Esophagus muscularis mucosa (tissue), 4 donors: ENCODE measurements at regions of chr18 and their contacts with region 1.

Region 1: DNA sequence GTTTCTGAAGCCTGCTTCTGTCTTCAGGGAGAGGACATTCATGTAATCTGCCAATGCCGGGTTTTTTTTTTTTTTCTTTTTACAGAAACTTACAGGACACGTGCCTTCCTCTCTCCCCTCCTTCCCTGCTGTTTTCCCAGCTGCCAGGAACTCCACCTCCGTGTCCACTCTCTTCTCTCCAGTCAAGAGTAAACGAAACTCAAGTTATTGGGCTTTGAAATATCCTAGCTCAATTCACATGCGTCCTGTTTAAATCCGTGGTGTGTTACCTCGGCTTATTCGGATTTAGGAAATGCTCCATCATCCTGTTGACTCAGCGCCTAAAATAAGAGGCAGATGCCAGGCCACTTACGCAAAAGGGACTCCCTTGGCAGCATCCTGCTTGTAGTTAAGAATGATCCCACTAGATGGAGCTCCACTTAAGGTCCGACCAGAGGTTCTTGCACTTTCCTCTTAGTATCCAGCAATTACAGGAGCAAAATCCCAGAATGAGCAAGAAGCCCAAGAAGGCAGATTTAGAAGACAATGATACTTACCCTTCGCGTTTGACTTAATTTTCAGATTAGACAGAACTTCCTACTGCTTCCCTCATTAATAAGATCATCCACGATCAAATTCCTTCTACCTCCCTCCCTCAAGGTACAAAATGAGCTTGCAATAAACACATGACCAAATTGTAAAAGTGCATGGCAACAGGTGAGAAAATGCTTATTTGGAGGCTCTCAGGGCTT is 97.2 kb upstream of the ZCCHC2 start:
- DNase-seq: peak; percentile 95
- H3K4me3 ChIP-seq: peak overlapping the region; percentile 39 to 51 (median 46)
- H3K27ac ChIP-seq: peak overlapping the region; percentile 79 to 85 (median 82)
- H3K4me1 ChIP-seq: peaks cover 11 to 17% (median 14%) of the 10 kb centered on the region in 4 donors
- H3K27me3 ChIP-seq: no peaks in the 10 kb centered on the region
- CTCF ChIP-seq: peak; percentile 88 to 91 (median 91)
- EP300 ChIP-seq: no peak
- POLR2A ChIP-seq: no peak

Region 2: DNA sequence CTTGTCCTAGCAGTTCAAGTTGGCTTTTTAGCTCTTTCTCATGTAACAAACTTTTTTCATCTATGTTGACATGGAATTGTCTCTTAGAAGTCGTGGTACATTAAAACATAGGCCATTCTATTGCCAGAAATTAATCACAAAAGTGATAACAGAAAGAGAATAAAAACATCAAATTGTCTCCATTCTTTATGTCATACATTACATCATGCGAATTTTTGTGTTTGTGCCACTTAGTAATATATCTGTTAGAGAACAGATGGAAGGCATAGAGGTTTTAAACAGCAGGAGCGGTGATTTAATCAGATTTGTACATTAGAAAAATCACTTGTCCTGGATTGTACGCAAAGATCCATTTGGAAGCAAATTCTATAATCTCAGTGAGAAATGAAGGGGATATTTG is 1228.9 kb before region 1 on chr18:
- intact Hi-C with region 1: no loop called
- DNase-seq: no peak
- H3K4me3 ChIP-seq: no peak overlapping the region
- H3K27ac ChIP-seq: no peak overlapping the region
- H3K4me1 ChIP-seq: no peaks in the 10 kb centered on the region
- H3K27me3 ChIP-seq: no peaks in the 10 kb centered on the region
- CTCF ChIP-seq: no peak
- EP300 ChIP-seq: no peak
- POLR2A ChIP-seq: no peak

Region 3: DNA sequence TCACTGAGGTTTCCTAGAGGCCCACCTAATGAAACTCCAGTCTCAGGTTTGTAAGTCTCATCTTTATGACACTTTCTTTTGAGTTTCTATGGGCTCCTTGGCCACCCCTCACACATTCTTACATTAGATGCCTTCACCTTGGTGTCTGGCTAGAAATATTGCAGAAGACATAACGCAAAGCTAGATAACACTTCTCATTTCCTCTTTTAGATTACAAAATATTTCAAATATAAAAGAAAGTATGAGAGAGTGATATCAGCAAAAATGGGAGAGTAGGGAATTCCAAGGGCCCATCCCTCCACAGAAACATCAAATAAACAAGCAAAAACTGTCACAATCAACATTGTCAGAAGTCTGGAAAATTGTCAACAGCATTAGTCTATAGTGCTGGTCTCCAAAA is 53.9 kb after region 1 on chr18:
- intact Hi-C with region 1: no loop called
- DNase-seq: no peak
- H3K4me3 ChIP-seq: no peak overlapping the region
- H3K27ac ChIP-seq: no peak overlapping the region
- H3K4me1 ChIP-seq: no peaks in the 10 kb centered on the region
- H3K27me3 ChIP-seq: peaks cover 0 to 9% (median 0%) of the 10 kb centered on the region in 4 donors
- CTCF ChIP-seq: no peak
- EP300 ChIP-seq: no peak
- POLR2A ChIP-seq: no peak

Region 4: GRCh38 chr18:62522504-62523254 is 97.0 kb after region 1 on chr18 and contains the start of gene ZCCHC2:
- intact Hi-C with region 1: loop called (anchors 5 kb)
- DNase-seq: peak; percentile 99
- H3K4me3 ChIP-seq: peak within 1 kb of the TSS; percentile 91 to 96 (median 94)
- H3K27ac ChIP-seq: peak within 1 kb of the TSS; percentile 95 to 99 (median 98)
- H3K4me1 ChIP-seq: peaks cover 22 to 39% (median 30%) of the 10 kb centered on the region in 4 donors
- H3K27me3 ChIP-seq: no peaks in the 10 kb centered on the region
- CTCF ChIP-seq: no peak
- EP300 ChIP-seq: no peak
- POLR2A ChIP-seq: peak; percentile 73
- total RNA-seq, gene ZCCHC2: 18.9 to 26.1 (median 23.8) TPM

Region 5: DNA sequence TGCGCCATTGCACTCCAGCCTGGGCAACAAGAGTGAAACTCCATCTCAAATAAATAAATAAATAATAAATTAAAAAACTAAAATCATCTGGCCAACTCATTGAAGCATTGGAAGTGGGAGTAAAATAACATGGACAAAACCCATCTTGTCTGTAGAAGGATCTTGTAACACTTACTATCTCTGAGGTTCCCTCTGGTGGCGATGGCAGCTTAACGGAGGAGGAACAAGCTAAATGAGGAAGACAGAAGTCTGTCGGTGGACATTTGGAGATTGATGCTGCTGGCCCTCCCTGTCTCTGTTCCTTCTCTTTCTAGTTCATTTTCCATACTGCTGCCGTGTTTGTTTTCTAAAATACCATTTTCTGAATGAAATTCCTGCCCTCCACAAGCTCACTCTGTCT is 140.6 kb after region 1 on chr18:
- intact Hi-C with region 1: loop called (anchors 5 kb)
- DNase-seq: no peak
- H3K4me3 ChIP-seq: no peak overlapping the region
- H3K27ac ChIP-seq: no peak overlapping the region
- H3K4me1 ChIP-seq: no peaks in the 10 kb centered on the region
- H3K27me3 ChIP-seq: no peaks in the 10 kb centered on the region
- CTCF ChIP-seq: peak; percentile 14 to 41 (median 33)
- EP300 ChIP-seq: no peak
- POLR2A ChIP-seq: no peak

Region 6: DNA sequence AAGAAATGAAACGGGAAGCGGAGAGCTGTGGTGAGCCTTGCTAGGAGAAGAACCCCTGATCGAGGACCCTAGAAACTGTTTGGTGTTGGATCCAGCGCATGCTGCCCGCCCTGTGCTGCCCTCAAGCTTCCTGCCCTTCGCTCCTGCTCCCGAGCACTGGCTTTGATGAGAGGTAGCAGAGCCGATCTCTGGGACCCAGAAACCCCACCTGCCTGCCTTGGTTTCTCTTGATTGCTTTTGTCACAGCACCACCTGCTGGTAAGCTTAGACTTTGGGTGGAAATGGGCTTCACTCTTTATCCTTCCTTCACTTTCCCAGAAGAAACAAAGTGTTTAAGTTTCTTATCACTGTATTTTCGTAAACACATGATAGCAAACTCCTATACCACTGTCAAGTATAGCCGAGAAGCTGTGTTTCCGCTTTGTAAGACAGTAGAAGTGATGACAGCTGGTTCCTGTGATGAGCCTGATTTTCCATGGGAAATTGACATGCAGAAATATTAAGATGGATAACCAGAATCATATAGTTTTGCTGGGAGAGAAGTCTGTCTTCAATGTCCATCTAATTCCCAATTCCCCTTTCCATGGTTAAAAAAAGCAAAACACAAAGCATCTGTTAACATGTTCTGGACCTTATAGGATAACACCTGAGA is 557.1 kb after region 1 on chr18:
- intact Hi-C with region 1: loop called (anchors 2 kb)
- DNase-seq: no peak
- H3K4me3 ChIP-seq: peak overlapping the region; percentile 42 to 53 (median 44)
- H3K27ac ChIP-seq: no peak overlapping the region
- H3K4me1 ChIP-seq: peaks cover 6 to 10% (median 8%) of the 10 kb centered on the region in 4 donors
- H3K27me3 ChIP-seq: no peaks in the 10 kb centered on the region
- CTCF ChIP-seq: peak; percentile 72 to 76 (median 73)
- EP300 ChIP-seq: no peak
- POLR2A ChIP-seq: no peak